Aorta (tissue), 5 donors: ENCODE measurements at regions of chr7 and their contacts with region 1.

Region 1: DNA sequence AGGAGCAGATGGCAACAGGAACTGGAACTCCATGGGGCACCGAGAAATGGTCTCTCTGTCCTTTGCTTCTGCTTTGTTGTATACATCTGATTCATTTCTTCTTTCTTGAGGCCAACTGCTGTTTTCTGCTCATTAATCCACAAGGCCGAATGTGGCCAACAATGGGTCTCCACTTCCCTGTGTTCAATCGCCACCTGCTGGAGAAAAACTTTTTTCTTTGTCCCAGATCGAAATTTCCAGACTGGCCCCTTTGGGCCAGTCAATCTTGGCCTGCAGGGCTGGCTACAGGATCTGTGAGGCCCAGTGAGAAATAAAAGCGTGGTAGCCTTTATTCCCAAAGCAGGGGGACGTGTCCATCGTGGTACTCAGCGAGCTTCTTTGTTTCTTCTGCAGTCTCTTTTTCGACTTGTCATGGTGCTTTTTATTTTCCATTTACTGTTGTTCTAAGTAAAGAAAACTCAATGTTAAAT is 58.8 kb downstream of the PARP12 start:
- DNase-seq: no peak
- ATAC-seq: no peak
- H3K4me3 ChIP-seq: no peak overlapping the region
- H3K27ac ChIP-seq: no peak overlapping the region
- H3K4me1 ChIP-seq: no peaks in the 10 kb centered on the region
- H3K27me3 ChIP-seq: no peaks in the 10 kb centered on the region

Region 2: GRCh38 chr7:139494835-139495579 is 508.9 kb before region 1 on chr7:
- intact Hi-C with region 1: loop called (anchors 5 kb)
- DNase-seq: no peak
- ATAC-seq: no peak
- H3K4me3 ChIP-seq: no peak overlapping the region
- H3K27ac ChIP-seq: no peak overlapping the region
- H3K4me1 ChIP-seq: no peaks in the 10 kb centered on the region
- H3K27me3 ChIP-seq: no peaks in the 10 kb centered on the region

Region 3: DNA sequence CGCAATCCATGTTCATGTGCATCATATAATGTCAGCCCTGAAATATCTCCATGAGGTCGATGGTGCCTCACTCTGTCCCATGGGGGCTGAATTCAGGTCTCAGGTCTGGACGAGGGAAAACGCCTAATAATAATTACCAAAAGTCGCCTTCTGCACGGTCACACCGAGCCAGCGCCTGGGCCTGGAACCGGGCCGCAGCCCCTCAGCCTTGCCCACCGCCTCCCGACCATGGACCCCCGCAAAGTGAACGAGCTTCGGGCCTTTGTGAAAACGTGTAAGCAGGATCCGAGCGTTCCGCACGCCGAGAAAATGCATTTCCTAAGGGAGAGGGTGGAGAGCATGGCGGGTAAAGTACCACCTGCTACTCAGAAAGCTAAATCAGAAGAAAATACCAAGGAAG is 501.7 kb before region 1 on chr7:
- intact Hi-C with region 1: loop called (anchors 5 kb)
- DNase-seq: no peak
- ATAC-seq: no peak
- H3K4me3 ChIP-seq: no peak overlapping the region
- H3K27ac ChIP-seq: no peak overlapping the region
- H3K4me1 ChIP-seq: no peaks in the 10 kb centered on the region
- H3K27me3 ChIP-seq: no peaks in the 10 kb centered on the region

Region 4: GRCh38 chr7:139602143-139602722 is 401.7 kb before region 1 on chr7:
- intact Hi-C with region 1: loop called in 1 of 2 experiments (anchors 5 kb)
- DNase-seq: no peak
- ATAC-seq: no peak
- H3K4me3 ChIP-seq: no peak overlapping the region
- H3K27ac ChIP-seq: no peak overlapping the region
- H3K4me1 ChIP-seq: peaks cover 0 to 5% of the 10 kb centered on the region in 2 donors
- H3K27me3 ChIP-seq: no peaks in the 10 kb centered on the region

Region 5: DNA sequence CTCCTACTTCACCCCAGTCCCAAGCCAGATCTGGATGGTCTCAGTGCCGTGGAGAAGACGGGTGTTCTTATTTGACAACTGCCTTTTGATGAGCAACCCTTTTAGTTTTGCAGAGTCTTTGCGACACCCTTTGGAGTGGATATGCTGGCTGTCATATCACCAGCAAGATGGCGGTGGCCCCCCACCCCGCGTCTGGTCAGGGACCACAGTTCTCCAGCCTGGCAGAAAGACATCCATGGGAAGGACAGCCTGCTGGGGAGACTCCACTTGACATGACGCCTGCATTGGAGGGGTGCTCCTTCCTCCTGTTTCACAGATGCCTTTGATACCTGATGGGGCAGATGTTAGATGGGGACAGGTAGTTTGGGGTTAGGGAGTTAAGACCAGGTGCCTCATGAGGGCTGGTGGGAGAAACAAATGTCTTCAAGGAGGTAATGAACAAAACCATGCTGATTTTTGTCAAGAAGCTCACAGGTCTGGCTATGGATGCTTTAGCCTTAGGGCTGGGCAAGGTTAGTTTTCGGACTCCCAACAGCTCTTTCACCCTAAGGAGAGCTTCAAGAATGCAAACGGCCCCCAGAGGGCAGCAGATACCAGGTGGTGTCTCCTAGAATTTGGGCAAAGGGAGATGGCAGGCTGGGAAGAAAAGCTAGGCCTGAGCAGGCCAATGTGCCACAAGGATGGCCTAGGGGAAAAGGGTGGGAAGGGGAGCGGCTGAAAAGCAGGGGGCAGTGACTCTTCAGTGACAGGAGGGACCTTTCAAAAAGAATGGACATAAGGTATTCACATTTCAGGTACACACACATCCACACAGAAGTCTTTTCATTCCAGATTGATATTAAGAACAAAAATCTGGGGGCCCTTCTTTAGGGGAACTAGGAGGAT is 385.2 kb before region 1 on chr7:
- intact Hi-C with region 1: loop called (anchors 5 kb)
- DNase-seq: peak in 1 of 2 donors; percentile 50
- ATAC-seq: peak; percentile 53
- H3K4me3 ChIP-seq: no peak overlapping the region
- H3K27ac ChIP-seq: no peak overlapping the region
- H3K4me1 ChIP-seq: no peaks in the 10 kb centered on the region
- H3K27me3 ChIP-seq: no peaks in the 10 kb centered on the region

Region 6: GRCh38 chr7:139645572-139646523 is 358.1 kb before region 1 on chr7:
- intact Hi-C with region 1: loop called (anchors 5 kb)
- DNase-seq: peak; percentile 87 to 94
- ATAC-seq: peak; percentile 84
- H3K4me3 ChIP-seq: no peak overlapping the region
- H3K27ac ChIP-seq: peak overlapping the region in 1 of 2 donors; percentile 43
- H3K4me1 ChIP-seq: peaks cover 0 to 1% of the 10 kb centered on the region in 2 donors
- H3K27me3 ChIP-seq: no peaks in the 10 kb centered on the region

Region 7: DNA sequence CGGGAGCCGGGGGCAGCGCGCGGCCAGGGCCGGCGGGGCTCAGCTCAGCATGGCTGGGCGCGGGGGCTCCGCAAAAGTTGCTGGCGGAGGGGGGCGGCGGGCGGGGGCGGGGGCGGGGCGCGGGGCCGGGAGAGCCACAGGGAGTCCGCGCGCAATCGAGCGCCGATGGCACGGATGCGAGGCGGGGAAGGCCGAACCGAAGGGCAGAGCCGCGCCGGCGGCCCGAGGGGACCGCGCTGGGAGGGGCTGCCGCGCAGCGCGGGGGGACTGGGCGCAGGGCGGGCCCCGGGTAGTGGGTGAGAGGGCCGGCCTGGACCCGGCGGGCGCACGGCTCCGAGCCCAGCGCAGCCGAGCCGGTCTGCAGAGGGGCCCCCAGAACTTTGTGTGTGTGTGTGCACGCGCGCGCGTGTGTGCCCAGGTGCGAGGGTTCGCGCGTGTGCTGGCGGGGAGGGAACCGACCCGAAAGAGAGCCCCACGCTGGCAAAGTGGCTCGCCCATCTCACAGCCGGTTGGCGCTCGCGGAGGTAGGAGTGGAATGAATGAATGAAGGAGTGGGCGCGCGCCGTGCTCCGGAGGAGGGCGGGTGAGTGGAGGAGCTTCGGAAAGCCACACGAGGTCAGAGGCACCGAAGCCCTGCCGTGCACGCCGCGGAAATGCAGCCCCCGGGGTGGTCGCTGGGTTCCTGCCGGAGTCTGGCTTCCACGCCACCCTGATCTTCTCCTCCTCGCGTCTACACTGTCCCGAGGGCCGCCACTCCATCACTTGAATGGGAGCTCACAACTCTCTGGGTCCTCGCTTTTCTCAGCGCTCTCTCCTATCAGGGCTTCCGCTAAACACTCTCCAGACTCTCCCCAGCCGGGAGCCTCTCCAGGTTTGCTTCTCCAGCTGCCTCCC is 225.8 kb before region 1 on chr7 and contains the start of gene HIPK2:
- intact Hi-C with region 1: loop called (anchors 5 to 10 kb)
- DNase-seq: peak; percentile 84 to 95
- ATAC-seq: peak; percentile 73
- H3K4me3 ChIP-seq: peak within 1 kb of the TSS; percentile 100
- H3K27ac ChIP-seq: peak within 1 kb of the TSS; percentile 72 to 99
- H3K4me1 ChIP-seq: peaks cover 0 to 5% of the 10 kb centered on the region in 2 donors
- H3K27me3 ChIP-seq: no peaks in the 10 kb centered on the region
- total RNA-seq, gene HIPK2: 35.3 to 108 TPM